CD4-positive, alpha-beta T cell (primary cell): ENCODE measurements at regions of chr1 and their contacts with region 1.

Region 1: GRCh38 chr1:173867753-173868265 is at the start of gene GAS5:
- DNase-seq: peak; percentile 98 to 100 (median 99)
- ATAC-seq: peak; percentile 79
- H3K4me3 ChIP-seq: peak within 1 kb of the TSS; percentile 90
- H3K4me3 Mint-ChIP-seq: peak within 1 kb of the TSS; percentile 93
- H3K27ac ChIP-seq: peak within 1 kb of the TSS; percentile 96
- H3K27ac Mint-ChIP-seq: peak within 1 kb of the TSS; percentile 95
- H3K4me1 ChIP-seq: peaks cover 59% of the 10 kb centered on the region
- H3K4me1 Mint-ChIP-seq: peaks cover 85% of the 10 kb centered on the region
- H3K27me3 ChIP-seq: no peaks in the 10 kb centered on the region
- H3K27me3 Mint-ChIP-seq: no peaks in the 10 kb centered on the region
- CTCF ChIP-seq: no peak
- total RNA-seq, gene GAS5: 865 to 867 TPM

Region 2: DNA sequence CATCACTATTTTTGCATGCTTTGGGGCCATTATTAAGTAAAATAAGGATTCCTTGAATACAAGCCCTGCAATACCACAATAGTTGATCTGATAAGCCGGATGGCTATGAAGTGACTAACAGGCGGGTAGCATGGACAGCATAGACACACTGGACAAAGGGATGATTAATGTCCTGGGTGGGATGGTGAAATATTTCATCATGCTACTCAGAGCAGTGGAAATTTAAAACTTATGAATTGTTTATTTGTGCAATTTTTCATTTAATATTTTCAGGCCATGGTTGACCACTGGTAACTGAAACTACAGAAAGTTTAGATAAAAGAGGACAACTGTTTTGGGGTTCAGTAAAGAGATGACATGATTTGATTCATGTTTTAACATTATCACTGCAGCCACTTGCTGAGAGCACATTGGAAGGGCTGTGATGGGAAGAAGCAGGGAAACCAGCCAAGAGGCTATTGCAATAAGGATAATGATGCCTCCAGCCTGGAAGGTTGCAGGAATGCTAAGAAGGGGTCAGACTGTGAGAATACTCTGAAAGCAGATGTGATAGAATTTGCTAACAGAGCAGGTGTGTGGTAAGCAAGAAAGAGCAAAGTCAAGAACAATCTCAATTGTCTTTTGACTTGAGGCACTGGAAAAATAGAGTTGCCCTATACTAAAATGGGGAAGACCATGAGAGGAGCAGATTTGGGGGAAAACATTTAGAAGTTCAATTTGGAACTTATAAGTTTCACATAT is 598.1 kb before region 1 on chr1:
- CTCF ChIA-PET with region 1: no interaction called
- POLR2A ChIA-PET with region 1: no interaction called
- intact Hi-C with region 1: no loop called
- DNase-seq: no peak
- ATAC-seq: no peak
- H3K4me3 ChIP-seq: no peak overlapping the region
- H3K4me3 Mint-ChIP-seq: no peak overlapping the region
- H3K27ac ChIP-seq: no peak overlapping the region
- H3K27ac Mint-ChIP-seq: no peak overlapping the region
- H3K4me1 ChIP-seq: no peaks in the 10 kb centered on the region
- H3K4me1 Mint-ChIP-seq: peaks cover 3% of the 10 kb centered on the region
- H3K27me3 ChIP-seq: no peaks in the 10 kb centered on the region
- H3K27me3 Mint-ChIP-seq: no peaks in the 10 kb centered on the region
- CTCF ChIP-seq: no peak

Region 3: GRCh38 chr1:173714759-173715537 is 152.9 kb before region 1 on chr1 and contains the start of gene KLHL20:
- CTCF ChIA-PET with region 1: no interaction called
- POLR2A ChIA-PET with region 1: interaction called, 19 read pairs
- intact Hi-C with region 1: loop called (anchors 2 to 5 kb)
- DNase-seq: peak; percentile 70 to 94 (median 81)
- ATAC-seq: peak; percentile 97
- H3K4me3 ChIP-seq: peak within 1 kb of the TSS; percentile 63
- H3K4me3 Mint-ChIP-seq: peak within 1 kb of the TSS; percentile 97
- H3K27ac ChIP-seq: peak within 1 kb of the TSS; percentile 73 to 81
- H3K27ac Mint-ChIP-seq: peak within 1 kb of the TSS; percentile 91
- H3K4me1 ChIP-seq: peaks cover 8% of the 10 kb centered on the region
- H3K4me1 Mint-ChIP-seq: peaks cover 36% of the 10 kb centered on the region
- H3K27me3 ChIP-seq: peaks cover 4 to 19% of the 10 kb centered on the region in 2 experiments
- H3K27me3 Mint-ChIP-seq: peaks cover 18% of the 10 kb centered on the region
- CTCF ChIP-seq: no peak
- total RNA-seq, gene KLHL20: 29.4 to 30.4 TPM